ENCODE measurements at regions of chr15 and their contacts with region 1.

Region 1: GRCh38 chr15:51162865-51163762 is 68.4 kb upstream of the TNFAIP8L3 start:
- DNase-seq: peak; percentile 92
- H3K4me3 ChIP-seq: peak overlapping the region; percentile 23 to 28 (median 26)
- H3K27ac ChIP-seq: no peak overlapping the region
- H3K4me1 ChIP-seq: peaks cover 4 to 14% (median 10%) of the 10 kb centered on the region in 4 donors
- H3K27me3 ChIP-seq: no peaks in the 10 kb centered on the region
- CTCF ChIP-seq: peak in 2 of 3 experiments; percentile 90 to 95
- EP300 ChIP-seq: no peak
- POLR2A ChIP-seq: no peak

Region 2: GRCh38 chr15:51192521-51193280 is 29.6 kb after region 1 on chr15:
- intact Hi-C with region 1: loop called (anchors 2 kb)
- DNase-seq: peak; percentile 96
- H3K4me3 ChIP-seq: no peak overlapping the region
- H3K27ac ChIP-seq: no peak overlapping the region
- H3K4me1 ChIP-seq: peaks cover 11 to 16% (median 13%) of the 10 kb centered on the region in 4 donors
- H3K27me3 ChIP-seq: peaks cover 0 to 20% (median 0%) of the 10 kb centered on the region in 4 donors
- CTCF ChIP-seq: peak; percentile 94 to 97 (median 96)
- EP300 ChIP-seq: no peak
- POLR2A ChIP-seq: no peak

Region 3: DNA sequence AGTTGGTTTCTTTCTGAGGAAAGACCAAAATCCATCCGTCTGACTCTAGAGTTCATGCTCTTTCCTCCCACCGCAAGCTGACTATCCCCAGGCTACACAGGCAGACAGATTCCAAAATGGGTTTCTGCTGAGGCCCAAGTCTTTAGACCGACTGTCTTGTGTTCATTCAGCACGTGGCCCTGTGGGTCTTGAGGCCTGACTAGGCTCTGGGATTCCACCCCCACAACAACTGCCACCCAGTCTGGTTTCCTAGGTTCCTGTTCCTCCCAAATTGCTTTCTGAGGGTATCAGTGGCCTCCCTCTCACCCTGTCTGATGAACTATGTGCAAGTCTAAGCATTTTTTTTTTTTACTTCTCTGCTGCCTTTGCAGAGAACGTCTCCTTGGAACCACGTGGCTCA is 107.6 kb after region 1 on chr15:
- intact Hi-C with region 1: loop called (anchors 10 kb)
- DNase-seq: no peak
- H3K4me3 ChIP-seq: no peak overlapping the region
- H3K27ac ChIP-seq: no peak overlapping the region
- H3K4me1 ChIP-seq: peaks cover 6 to 18% (median 12%) of the 10 kb centered on the region in 4 donors
- H3K27me3 ChIP-seq: peaks cover 0 to 74% (median 3%) of the 10 kb centered on the region in 4 donors
- CTCF ChIP-seq: no peak
- EP300 ChIP-seq: no peak
- POLR2A ChIP-seq: no peak

Region 4: GRCh38 chr15:51380999-51381795 is 218.1 kb after region 1 on chr15:
- intact Hi-C with region 1: loop called (anchors 5 kb)
- DNase-seq: no peak
- H3K4me3 ChIP-seq: no peak overlapping the region
- H3K27ac ChIP-seq: no peak overlapping the region
- H3K4me1 ChIP-seq: peaks cover 6 to 32% (median 28%) of the 10 kb centered on the region in 4 donors
- H3K27me3 ChIP-seq: peaks cover 0 to 18% (median 0%) of the 10 kb centered on the region in 4 donors
- CTCF ChIP-seq: peak; percentile 85 to 89 (median 88)
- EP300 ChIP-seq: no peak
- POLR2A ChIP-seq: no peak

Region 5: GRCh38 chr15:51401872-51402517 is 238.9 kb after region 1 on chr15:
- intact Hi-C with region 1: loop called (anchors 5 kb)
- DNase-seq: peak; percentile 92
- H3K4me3 ChIP-seq: no peak overlapping the region
- H3K27ac ChIP-seq: no peak overlapping the region
- H3K4me1 ChIP-seq: peaks cover 0 to 8% (median 3%) of the 10 kb centered on the region in 4 donors
- H3K27me3 ChIP-seq: peaks cover 0 to 6% (median 0%) of the 10 kb centered on the region in 4 donors
- CTCF ChIP-seq: peak in 2 of 3 experiments; percentile 31 to 48
- EP300 ChIP-seq: no peak
- POLR2A ChIP-seq: no peak

Measured in esophagus muscularis mucosa (tissue), 4 donors.